ENCODE measurements at regions of chr1 and their contacts with region 1.

Region 1: GRCh38 chr1:20063861-20064292 is 6.1 kb upstream of the PLA2G5 start:
- DNase-seq: peak; percentile 88
- ATAC-seq: peak; percentile 92
- H3K4me3 ChIP-seq: no peak overlapping the region
- H3K27ac ChIP-seq: peak overlapping the region; percentile 56
- H3K4me1 ChIP-seq: peaks cover 19% of the 10 kb centered on the region
- H3K27me3 ChIP-seq: no peaks in the 10 kb centered on the region
- CTCF ChIP-seq: no peak

Region 2: DNA sequence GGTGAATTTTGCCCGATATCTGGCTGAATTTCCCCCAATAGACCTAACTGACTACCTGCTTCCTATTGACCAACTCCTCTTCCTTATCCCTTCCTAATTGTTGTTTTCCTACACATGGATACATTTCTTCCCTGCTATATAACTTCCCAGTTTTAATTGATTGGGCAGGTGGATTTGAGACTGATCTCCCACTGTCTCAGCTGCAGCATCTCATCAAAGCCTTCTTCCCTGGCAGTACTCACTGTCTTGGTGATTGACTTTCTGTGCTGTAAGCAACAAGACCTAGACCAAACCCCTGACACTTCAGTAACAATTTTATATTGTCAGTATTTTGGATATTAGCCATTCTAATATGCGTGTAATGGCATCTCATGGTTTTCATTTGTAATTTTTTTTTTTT is 73.2 kb before region 1 on chr1:
- CTCF ChIA-PET with region 1: no interaction called
- POLR2A ChIA-PET with region 1: no interaction called
- intact Hi-C with region 1: loop called (anchors 5 kb)
- DNase-seq: no peak
- ATAC-seq: no peak
- H3K4me3 ChIP-seq: no peak overlapping the region
- H3K27ac ChIP-seq: no peak overlapping the region
- H3K4me1 ChIP-seq: no peaks in the 10 kb centered on the region
- H3K27me3 ChIP-seq: peaks cover 18% of the 10 kb centered on the region; the same call in 1 of the 2 replicates
- CTCF ChIP-seq: no peak

Measured in PC-3 (cell line).